Right ventricle myocardium superior (tissue), 1 donor: ENCODE measurements at regions of chr5 and their contacts with region 1.

Region 1: GRCh38 chr5:33440482-33441240 is at the start of gene TARS1:
- DNase-seq: peak; percentile 98
- ATAC-seq: peak; percentile 98
- total RNA-seq, gene TARS1: 63.4 TPM

Region 2: DNA sequence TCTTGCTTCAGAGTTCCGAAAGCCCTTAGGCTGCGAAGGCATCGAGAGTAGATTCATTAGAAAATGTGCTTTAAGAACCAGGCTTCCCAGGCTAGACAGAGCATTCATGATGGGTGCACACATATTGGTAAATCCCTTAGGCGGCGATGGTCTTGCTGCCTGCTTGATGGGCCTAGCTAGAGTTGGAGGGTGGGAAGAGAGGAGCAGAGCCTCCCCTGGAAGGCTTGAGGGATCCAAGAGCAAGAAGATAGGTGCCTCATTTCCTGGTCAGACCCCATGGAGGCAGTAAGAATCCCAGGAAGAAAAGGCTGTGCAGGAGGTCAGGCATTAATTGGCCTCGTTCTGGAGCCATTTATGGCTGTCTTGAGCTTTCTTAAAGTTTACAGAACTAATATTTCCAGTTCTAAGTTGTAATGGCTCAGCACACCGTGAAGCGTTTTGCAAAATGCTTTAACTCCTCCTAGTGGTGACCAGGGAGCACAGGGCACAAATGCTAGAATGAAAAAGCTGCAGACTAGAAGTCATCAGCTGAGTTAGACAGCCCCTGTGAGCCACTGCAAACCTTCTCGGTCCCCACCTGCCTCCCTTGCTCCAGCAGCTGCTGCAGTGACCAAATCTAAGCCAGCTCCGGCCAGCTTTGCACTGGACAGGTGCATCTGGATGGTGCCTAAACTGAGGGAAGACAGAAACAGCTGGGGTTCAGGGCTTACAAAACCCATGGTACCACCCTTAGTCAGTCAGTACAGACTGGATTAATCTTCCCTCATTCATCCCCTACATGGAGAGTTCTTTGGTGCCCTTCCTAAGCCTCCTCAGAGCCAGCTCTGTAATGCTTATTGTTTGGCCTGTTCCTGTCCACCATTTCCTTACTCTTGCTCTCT is 529.2 kb after region 1 on chr5:
- intact Hi-C with region 1: loop called (anchors 10 kb)
- DNase-seq: peak; percentile 33
- ATAC-seq: peak; percentile 76

Region 3: GRCh38 chr5:34915139-34915855 is 1474.6 kb after region 1 on chr5 and contains the starts of genes BRIX1 and RAD1:
- intact Hi-C with region 1: loop called (anchors 10 kb)
- DNase-seq: peak; percentile 98
- ATAC-seq: peak; percentile 100
- total RNA-seq, gene BRIX1: 9.0 TPM
- total RNA-seq, gene RAD1: 21.5 TPM